Upper lobe of right lung (tissue), 1 donor: ENCODE measurements at regions of chr1 and their contacts with region 1.

Region 1: DNA sequence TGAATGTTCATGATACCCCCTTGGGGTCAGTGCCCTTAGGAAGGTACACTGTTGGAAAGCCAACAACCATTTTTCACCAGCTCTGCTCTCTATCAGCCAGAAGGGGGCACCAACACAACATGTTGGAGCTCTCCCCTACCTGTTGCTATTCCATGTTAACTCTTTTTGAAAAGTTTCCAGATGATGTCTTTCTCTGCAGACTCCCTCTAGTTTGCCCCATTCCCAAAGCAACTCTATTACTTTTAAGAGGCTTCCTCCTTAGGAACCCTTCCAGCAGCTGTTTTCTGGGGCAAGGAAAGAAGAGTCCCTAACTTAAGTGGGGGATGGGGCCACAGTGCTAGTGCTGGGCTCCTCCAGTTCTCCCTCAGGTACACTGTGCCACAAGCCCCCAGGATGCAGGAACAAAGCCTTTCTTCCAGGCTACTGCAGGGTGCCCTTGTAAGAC is 22.9 kb upstream of the NDC1 start:
- DNase-seq: no peak
- ATAC-seq: peak; percentile 87
- H3K4me3 ChIP-seq: no peak overlapping the region
- H3K27ac ChIP-seq: no peak overlapping the region
- H3K4me1 ChIP-seq: no peaks in the 10 kb centered on the region
- H3K27me3 ChIP-seq: no peaks in the 10 kb centered on the region
- CTCF ChIP-seq: peak; percentile 74

Region 2: DNA sequence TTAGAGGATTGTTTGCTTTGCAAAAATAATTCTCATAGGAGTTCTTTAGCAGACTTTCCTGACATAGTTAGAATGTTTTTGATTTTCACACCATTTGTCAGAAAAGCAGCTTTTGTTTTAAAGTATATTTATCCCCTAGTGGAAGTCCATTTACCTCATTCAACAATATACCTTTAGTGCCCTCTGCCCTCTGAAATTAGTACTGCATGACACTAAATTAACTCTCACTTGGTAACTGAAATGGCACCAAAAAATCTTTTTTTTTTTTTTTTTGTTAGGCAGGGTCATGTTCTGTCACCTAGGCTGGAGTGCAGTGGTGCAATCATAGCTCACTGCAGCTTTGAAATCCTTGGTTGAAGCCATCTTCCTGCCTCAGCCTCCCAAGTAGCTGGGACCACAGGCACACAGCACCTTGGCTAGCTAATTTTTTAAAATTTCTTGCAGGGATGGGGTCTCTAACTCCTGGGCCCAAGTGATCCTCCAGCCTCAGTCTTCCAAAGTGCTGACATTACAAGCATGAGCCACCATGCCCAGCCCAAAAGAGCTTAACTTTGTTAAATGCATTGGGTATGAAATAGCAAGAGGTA is 98.8 kb after region 1 on chr1:
- intact Hi-C with region 1: loop called (anchors 10 kb)
- DNase-seq: no peak
- ATAC-seq: peak; percentile 49
- H3K4me3 ChIP-seq: no peak overlapping the region
- H3K27ac ChIP-seq: no peak overlapping the region
- H3K4me1 ChIP-seq: peaks cover 15% of the 10 kb centered on the region
- H3K27me3 ChIP-seq: no peaks in the 10 kb centered on the region
- CTCF ChIP-seq: peak; percentile 51